ENCODE measurements at regions of chr11 and their contacts with region 1.

Region 1: GRCh38 chr11:8688414-8689362 is 6.1 kb downstream of the RPL27A start:
- DNase-seq: peak; percentile 92 to 98
- H3K4me3 ChIP-seq: peak overlapping the region; percentile 39 to 68 (median 49)
- H3K27ac ChIP-seq: peak overlapping the region; percentile 78
- H3K4me1 ChIP-seq: peaks cover 0 to 15% (median 8%) of the 10 kb centered on the region in 4 experiments; a peak in 4 of 7 replicates
- H3K27me3 ChIP-seq: no peaks in the 10 kb centered on the region
- CTCF ChIP-seq: peak; percentile 10 to 17 (median 13); a peak in 2 of 4 replicates
- EP300 ChIP-seq: no peak
- POLR2A ChIP-seq: peak; percentile 96
- RAD21 ChIP-seq: peak; percentile 41 to 50

Region 2: GRCh38 chr11:8573777-8574176 is 114.9 kb before region 1 on chr11:
- CTCF ChIA-PET with region 1: no interaction called
- POLR2A ChIA-PET with region 1: no interaction called
- DNase-seq: no peak
- H3K4me3 ChIP-seq: no peak overlapping the region
- H3K27ac ChIP-seq: no peak overlapping the region
- H3K4me1 ChIP-seq: no peaks in the 10 kb centered on the region
- H3K27me3 ChIP-seq: no peaks in the 10 kb centered on the region
- CTCF ChIP-seq: no peak
- EP300 ChIP-seq: no peak
- POLR2A ChIP-seq: no peak
- RAD21 ChIP-seq: no peak

Region 3: DNA sequence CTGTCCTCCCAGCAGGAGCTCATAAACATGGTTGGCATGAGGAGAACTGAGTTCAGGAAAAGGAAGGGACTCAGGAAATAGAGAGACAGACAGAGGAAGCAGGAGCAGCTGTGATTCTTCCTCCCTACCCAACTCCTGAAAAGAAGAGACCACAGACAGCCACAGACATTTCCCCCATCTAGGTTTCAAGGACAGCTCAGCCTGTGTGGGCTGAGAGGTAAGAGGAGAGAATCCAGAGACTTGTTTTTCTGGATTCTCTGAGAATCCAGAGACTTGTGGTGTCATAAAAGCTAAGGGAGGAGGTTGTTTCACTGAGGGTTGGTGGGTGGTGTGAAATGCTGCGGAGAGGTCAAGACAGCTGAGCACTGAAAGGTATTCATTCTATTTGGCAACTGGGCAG is 75.7 kb before region 1 on chr11:
- CTCF ChIA-PET with region 1: no interaction called
- POLR2A ChIA-PET with region 1: interaction called, 13 read pairs
- DNase-seq: no peak
- H3K4me3 ChIP-seq: no peak overlapping the region
- H3K27ac ChIP-seq: no peak overlapping the region
- H3K4me1 ChIP-seq: no peaks in the 10 kb centered on the region
- H3K27me3 ChIP-seq: no peaks in the 10 kb centered on the region
- CTCF ChIP-seq: no peak
- EP300 ChIP-seq: no peak
- POLR2A ChIP-seq: no peak
- RAD21 ChIP-seq: no peak

Region 4: DNA sequence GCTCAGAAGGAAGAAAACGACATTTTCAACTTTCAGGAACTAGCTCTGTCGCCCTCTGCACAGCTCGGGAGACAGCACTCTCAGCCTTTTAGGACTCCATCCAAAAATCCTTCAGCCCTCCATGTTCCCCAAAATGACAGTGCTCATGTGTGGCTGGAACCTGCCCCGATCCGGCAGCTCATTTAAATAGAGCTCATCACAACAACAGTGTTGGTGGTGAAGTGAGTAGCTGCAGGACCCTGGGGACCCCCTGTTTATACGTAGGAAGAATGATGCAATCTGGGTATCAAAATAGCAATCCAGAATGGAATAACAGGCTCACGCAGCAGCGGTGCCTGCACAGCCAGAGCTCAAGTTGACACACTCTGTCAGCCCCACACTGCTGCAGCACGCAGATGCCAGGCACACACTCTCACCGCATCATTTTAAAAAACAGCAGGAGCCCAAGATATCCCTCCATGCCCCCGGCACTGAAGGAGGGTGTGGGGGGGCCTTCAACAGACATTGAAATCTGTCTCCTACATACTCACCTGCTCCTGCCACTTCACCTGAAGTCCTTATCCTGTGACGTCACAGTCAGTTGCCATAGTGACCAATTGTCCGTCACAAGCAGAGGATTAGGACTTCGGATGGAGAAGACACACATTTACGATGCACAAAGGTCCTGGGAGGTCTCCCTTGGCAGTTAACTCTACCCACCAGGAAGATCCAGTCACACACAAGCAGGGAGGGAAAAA is 30.2 kb before region 1 on chr11:
- CTCF ChIA-PET with region 1: interaction called, 4 read pairs
- POLR2A ChIA-PET with region 1: interaction called, 143 read pairs
- DNase-seq: no peak
- H3K4me3 ChIP-seq: no peak overlapping the region
- H3K27ac ChIP-seq: no peak overlapping the region
- H3K4me1 ChIP-seq: peaks cover 0 to 3% (median 0%) of the 10 kb centered on the region in 4 experiments; a peak in 3 of 7 replicates
- H3K27me3 ChIP-seq: no peaks in the 10 kb centered on the region
- CTCF ChIP-seq: no peak
- EP300 ChIP-seq: no peak
- POLR2A ChIP-seq: no peak
- RAD21 ChIP-seq: no peak

Region 5: GRCh38 chr11:8699903-8700302 is 11.2 kb after region 1 on chr11:
- CTCF ChIA-PET with region 1: interaction called, 5 read pairs
- POLR2A ChIA-PET with region 1: interaction called, 248 read pairs
- DNase-seq: no peak
- H3K4me3 ChIP-seq: no peak overlapping the region
- H3K27ac ChIP-seq: peak overlapping the region; percentile 44; the same call in 1 of the 2 replicates
- H3K4me1 ChIP-seq: peaks cover 15 to 30% (median 20%) of the 10 kb centered on the region in 4 experiments; a peak in 6 of 7 replicates
- H3K27me3 ChIP-seq: no peaks in the 10 kb centered on the region
- CTCF ChIP-seq: no peak
- EP300 ChIP-seq: no peak
- POLR2A ChIP-seq: peak in 1 of 2 experiments; percentile 27; a peak in 2 of 3 replicates
- RAD21 ChIP-seq: no peak

Region 6: GRCh38 chr11:8717876-8718753 is 29.4 kb after region 1 on chr11:
- CTCF ChIA-PET with region 1: no interaction called
- POLR2A ChIA-PET with region 1: interaction called, 24 read pairs
- DNase-seq: no peak
- H3K4me3 ChIP-seq: no peak overlapping the region
- H3K27ac ChIP-seq: peak overlapping the region; percentile 42; the same call in 1 of the 2 replicates
- H3K4me1 ChIP-seq: peaks cover 0 to 14% (median 7%) of the 10 kb centered on the region in 4 experiments; a peak in 4 of 7 replicates
- H3K27me3 ChIP-seq: no peaks in the 10 kb centered on the region
- CTCF ChIP-seq: no peak
- EP300 ChIP-seq: no peak
- POLR2A ChIP-seq: no peak
- RAD21 ChIP-seq: no peak

Region 7: DNA sequence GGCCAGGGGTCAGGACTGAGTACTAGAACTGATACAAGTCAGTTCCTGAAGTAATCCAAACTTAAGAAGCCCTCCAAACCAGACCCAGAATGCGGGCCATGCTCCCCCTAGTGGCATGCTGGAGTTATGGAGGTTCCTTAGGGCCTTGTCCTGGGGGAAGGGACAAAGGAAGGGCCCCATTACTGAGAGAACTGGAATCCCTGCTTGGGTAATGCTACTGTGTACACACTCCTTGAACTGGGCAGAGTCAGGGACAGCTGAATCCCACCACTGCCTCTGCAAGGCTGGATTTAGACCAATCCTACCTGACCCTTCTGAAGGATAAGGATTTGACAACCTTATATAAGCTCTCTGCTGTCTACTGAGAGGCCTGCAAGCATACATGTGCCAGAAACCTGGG is 125.0 kb after region 1 on chr11:
- CTCF ChIA-PET with region 1: interaction called, 3 read pairs
- POLR2A ChIA-PET with region 1: interaction called, 25 read pairs
- DNase-seq: peak; percentile 77 to 88
- H3K4me3 ChIP-seq: no peak overlapping the region
- H3K27ac ChIP-seq: no peak overlapping the region
- H3K4me1 ChIP-seq: peaks cover 13 to 28% (median 22%) of the 10 kb centered on the region in 4 experiments; a peak in 6 of 7 replicates
- H3K27me3 ChIP-seq: no peaks in the 10 kb centered on the region
- CTCF ChIP-seq: peak; percentile 83 to 95 (median 90)
- EP300 ChIP-seq: no peak
- POLR2A ChIP-seq: no peak
- RAD21 ChIP-seq: peak; percentile 87 to 93

Measured in H1 (cell line).